ENCODE measurements at regions of chr11 and their contacts with region 1.

Region 1: DNA sequence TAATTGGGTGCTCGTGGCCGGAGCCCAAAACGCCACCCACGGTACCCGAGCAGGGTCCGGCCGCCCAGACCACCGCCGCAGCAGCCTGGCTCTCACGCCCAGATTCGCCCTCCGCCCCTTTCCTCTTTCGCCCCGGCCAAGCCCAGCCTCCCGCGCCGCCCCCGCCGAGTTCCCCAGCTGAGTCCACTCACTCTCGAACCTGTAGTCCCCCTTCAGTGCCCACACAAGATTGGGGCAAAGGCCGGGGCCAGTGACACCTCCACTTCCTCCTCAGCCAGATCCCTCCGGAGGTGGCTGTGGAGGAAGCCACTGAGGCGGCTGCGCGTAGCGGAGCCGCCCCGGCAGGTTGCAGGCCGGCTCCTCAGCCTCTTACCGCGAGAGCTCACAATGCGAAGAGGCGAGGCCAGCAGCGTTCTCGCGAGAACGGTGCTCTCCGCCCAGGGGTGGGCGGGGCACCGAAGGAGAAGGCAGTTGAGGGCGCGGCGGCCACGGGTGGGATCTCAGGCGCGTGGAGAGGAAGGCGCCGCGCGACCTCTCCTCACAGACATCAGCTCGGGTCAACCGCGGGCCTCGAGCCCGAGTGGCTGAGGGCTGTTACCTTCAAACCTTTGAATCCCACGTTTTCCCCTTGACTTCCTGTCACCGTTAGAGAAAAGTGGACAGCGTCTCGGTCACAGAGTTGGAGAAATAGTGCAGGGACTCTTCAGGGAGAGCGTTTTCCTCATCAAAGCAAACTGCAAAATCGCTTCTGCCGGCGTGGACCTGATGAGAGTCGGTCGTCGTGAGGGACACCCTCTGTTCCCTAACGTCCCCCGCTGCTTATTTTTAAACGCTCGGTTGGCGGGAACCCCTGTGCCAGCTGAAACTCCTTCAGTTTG is at the start of gene BTBD10:
- DNase-seq: peak; percentile 97
- H3K4me3 ChIP-seq: peak within 1 kb of the TSS; percentile 13 to 76 (median 70)
- H3K27ac ChIP-seq: peak within 1 kb of the TSS; percentile 60
- H3K4me1 ChIP-seq: peaks cover 26% of the 10 kb centered on the region
- H3K27me3 ChIP-seq: peaks cover 2 to 6% of the 10 kb centered on the region in 2 experiments
- CTCF ChIP-seq: no peak
- POLR2A ChIP-seq: peak; percentile 86
- total RNA-seq, gene BTBD10: 49.6 and 54.8 TPM in 2 replicates

Region 2: GRCh38 chr11:13140028-13140870 is 322.9 kb before region 1 on chr11:
- CTCF ChIA-PET with region 1: no interaction called
- POLR2A ChIA-PET with region 1: no interaction called
- dilution Hi-C with region 1: no loop called
- intact Hi-C with region 1: no loop called
- DNase-seq: no peak
- H3K4me3 ChIP-seq: no peak overlapping the region
- H3K27ac ChIP-seq: no peak overlapping the region
- H3K4me1 ChIP-seq: peaks cover 14% of the 10 kb centered on the region
- H3K27me3 ChIP-seq: no peaks in the 10 kb centered on the region
- CTCF ChIP-seq: no peak
- POLR2A ChIP-seq: no peak

Region 3: GRCh38 chr11:13216019-13216710 is 247.0 kb before region 1 on chr11:
- CTCF ChIA-PET with region 1: no interaction called
- POLR2A ChIA-PET with region 1: no interaction called
- dilution Hi-C with region 1: no loop called
- intact Hi-C with region 1: loop called (anchors 2 kb)
- DNase-seq: peak; percentile 66
- H3K4me3 ChIP-seq: peak overlapping the region in 1 of 3 experiments; percentile 17
- H3K27ac ChIP-seq: peak overlapping the region; percentile 99
- H3K4me1 ChIP-seq: peaks cover 20% of the 10 kb centered on the region
- H3K27me3 ChIP-seq: no peaks in the 10 kb centered on the region
- CTCF ChIP-seq: no peak
- POLR2A ChIP-seq: peak; percentile 53

Region 4: GRCh38 chr11:13335319-13335718 is 127.8 kb before region 1 on chr11:
- CTCF ChIA-PET with region 1: interaction called, 4 read pairs
- POLR2A ChIA-PET with region 1: no interaction called
- dilution Hi-C with region 1: no loop called
- intact Hi-C with region 1: loop called (anchors 5 kb)
- DNase-seq: peak; percentile 61
- H3K4me3 ChIP-seq: no peak overlapping the region
- H3K27ac ChIP-seq: no peak overlapping the region
- H3K4me1 ChIP-seq: peaks cover 27% of the 10 kb centered on the region
- H3K27me3 ChIP-seq: no peaks in the 10 kb centered on the region
- CTCF ChIP-seq: peak; percentile 82 to 91
- POLR2A ChIP-seq: no peak

Region 5: GRCh38 chr11:13354335-13354734 is 108.8 kb before region 1 on chr11:
- CTCF ChIA-PET with region 1: interaction called, 42 read pairs
- POLR2A ChIA-PET with region 1: no interaction called
- dilution Hi-C with region 1: no loop called
- intact Hi-C with region 1: loop called (anchors 2 kb)
- DNase-seq: peak; percentile 44
- H3K4me3 ChIP-seq: no peak overlapping the region
- H3K27ac ChIP-seq: no peak overlapping the region
- H3K4me1 ChIP-seq: no peaks in the 10 kb centered on the region
- H3K27me3 ChIP-seq: no peaks in the 10 kb centered on the region
- CTCF ChIP-seq: peak; percentile 45 to 46
- POLR2A ChIP-seq: no peak

Region 6: GRCh38 chr11:13668102-13668956 is 205.2 kb after region 1 on chr11 and contains the start of gene FAR1:
- CTCF ChIA-PET with region 1: no interaction called
- POLR2A ChIA-PET with region 1: no interaction called
- dilution Hi-C with region 1: no loop called
- intact Hi-C with region 1: loop called (anchors 5 kb)
- DNase-seq: peak; percentile 100
- H3K4me3 ChIP-seq: peak within 1 kb of the TSS; percentile 84 to 95 (median 90)
- H3K27ac ChIP-seq: peak within 1 kb of the TSS; percentile 81
- H3K4me1 ChIP-seq: peaks cover 20% of the 10 kb centered on the region
- H3K27me3 ChIP-seq: no peaks in the 10 kb centered on the region
- CTCF ChIP-seq: peak; percentile 59 to 71
- POLR2A ChIP-seq: peak; percentile 75
- total RNA-seq, gene FAR1: 72.3 and 76.4 TPM in 2 replicates